ENCODE measurements at regions of chr3 and their contacts with region 1.

Region 1: DNA sequence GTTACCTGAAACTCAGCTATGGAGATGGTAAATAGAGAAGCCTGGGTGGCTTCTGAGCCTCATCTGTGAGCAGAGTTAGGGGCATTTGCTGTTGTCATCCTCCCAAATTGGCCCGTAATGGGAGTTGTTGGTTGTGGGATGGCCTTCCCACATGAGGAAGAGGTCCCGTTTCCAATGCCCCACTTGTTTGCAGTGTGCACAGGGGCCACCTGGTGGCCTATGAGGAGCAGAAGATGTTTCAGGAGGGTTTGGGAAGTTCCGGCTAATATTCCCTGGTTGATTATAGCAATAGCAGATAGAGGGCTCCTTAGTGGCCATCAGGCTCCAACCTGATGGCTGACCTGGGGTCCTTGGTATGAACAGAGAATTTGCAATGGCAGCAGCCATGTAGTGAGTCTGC is 1546.5 kb downstream of the OTOL1 start:
- DNase-seq: peak in 1 of 10 donors; percentile 67

Region 2: GRCh38 chr3:161914737-161915417 is 1128.2 kb before region 1 on chr3:
- intact Hi-C with region 1: loop called (anchors 5 kb)
- DNase-seq: peak in 9 of 10 donors; percentile 28 to 91 (median 60)

Region 3: DNA sequence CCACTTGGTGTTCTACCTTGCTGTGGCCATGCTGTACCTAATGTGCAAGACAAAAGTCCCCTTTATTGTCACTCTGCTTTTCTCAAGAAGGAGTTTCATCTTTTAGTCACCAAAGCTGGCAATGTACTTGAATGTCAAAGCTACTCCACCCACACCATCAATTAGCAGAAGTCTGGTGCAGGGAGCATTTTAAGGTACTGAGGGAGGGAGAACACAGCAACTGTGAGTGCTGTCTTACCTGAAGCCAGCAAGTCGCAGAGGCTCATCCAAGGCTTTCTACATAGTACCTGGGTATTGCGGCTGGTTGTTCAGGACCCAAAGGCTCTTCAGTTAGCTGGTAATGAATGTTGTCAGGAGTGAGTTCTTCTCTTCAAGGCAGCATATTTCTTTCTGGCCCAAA is 726.0 kb before region 1 on chr3:
- intact Hi-C with region 1: no loop called
- DNase-seq: no peak

Region 4: GRCh38 chr3:162719684-162720341 is 323.3 kb before region 1 on chr3:
- intact Hi-C with region 1: no loop called
- DNase-seq: no peak

Region 5: GRCh38 chr3:162978136-162978535 is 64.9 kb before region 1 on chr3:
- intact Hi-C with region 1: no loop called
- DNase-seq: no peak